B cell (primary cell): ENCODE measurements at regions of chr9 and their contacts with region 1.

Region 1: DNA sequence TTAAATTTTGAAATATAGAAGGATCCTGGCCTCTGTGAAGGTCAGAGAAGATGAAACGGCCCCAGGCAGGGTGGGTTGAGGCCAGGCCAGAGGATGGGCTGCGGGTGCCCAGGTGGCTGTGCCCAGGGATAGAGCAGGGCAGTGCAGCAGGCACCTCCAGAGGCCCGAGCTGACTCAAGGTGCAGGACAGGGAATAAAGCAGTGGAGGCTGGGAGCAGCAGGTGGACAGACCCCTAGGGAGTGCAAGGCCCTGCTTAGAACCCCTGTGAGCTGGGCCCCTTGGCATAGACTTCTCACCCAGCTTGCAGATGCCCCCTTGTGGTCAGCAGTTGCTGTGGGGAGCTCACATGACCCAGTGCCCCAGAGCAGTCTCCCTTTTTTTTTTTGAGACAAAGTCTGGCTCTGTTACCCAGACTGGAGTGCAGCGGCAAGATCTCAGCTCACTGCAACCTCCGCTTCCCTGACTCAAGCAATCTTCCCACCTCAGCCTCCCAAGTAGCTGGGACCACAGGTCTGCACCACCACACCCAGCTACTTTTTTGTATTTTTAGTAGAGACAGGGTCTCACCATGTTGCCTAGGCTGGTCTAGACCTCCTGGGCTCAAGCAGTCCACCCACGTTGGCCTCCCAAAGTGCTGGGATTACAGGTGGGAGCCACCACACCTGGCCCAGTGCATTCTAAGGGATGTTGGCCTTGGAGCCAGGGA is 118.8 kb downstream of the WNK2 start:
- DNase-seq: peak; percentile 82
- ATAC-seq: peak; percentile 82
- H3K4me3 ChIP-seq: no peak overlapping the region
- H3K4me3 Mint-ChIP-seq: no peak overlapping the region
- H3K27ac ChIP-seq: no peak overlapping the region
- H3K27ac Mint-ChIP-seq: no peak overlapping the region
- H3K4me1 ChIP-seq: peaks cover 0 to 5% of the 10 kb centered on the region in 2 donors
- H3K4me1 Mint-ChIP-seq: no peaks in the 10 kb centered on the region
- H3K27me3 ChIP-seq: no peaks in the 10 kb centered on the region
- H3K27me3 Mint-ChIP-seq: peaks cover 7% of the 10 kb centered on the region
- CTCF ChIP-seq: peak; percentile 62

Region 2: DNA sequence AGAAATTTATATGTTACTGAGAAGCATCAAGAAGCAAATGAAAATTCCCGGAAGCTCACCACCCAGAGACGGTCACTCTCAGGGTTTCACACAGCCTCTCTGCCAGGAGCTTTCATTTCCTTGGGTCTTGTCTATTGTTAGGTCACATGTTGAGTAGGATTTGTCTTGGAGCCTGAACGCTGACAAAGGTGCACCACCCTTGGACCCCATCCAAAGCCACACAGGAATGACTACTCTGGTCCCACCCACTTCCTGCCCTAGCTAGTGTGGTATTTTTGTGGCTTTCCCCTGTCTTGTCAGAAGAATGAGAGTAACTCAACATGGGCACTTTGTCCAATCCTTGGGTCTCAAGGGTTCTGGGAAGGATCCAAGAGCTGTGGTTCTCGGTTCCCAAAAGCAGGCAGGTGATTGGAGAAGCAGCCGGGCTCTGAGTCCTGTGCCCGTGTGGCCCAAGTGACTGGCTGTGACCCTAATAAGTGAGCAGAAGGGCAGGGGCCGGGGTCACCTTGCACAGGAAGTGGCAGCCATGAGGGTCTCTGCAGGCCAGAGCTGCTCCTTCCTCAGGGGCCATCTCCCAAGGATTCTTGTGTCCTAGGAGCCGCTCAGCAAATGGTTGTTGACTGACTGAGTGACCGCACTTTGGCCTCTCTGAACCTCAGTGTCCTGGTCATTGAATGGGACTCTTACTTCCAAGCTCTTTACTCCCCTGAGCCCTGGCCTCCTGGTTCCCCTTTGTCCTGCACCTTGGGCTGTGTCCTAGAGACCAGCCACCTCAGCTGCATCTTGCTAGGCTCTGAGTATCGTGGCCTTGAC is 348.4 kb before region 1 on chr9:
- CTCF ChIA-PET with region 1: interaction called, 11 read pairs
- POLR2A ChIA-PET with region 1: interaction called, 3 read pairs
- intact Hi-C with region 1: no loop called
- DNase-seq: peak; percentile 37
- ATAC-seq: peak; percentile 53
- H3K4me3 ChIP-seq: peak overlapping the region in 4 of 5 experiments; percentile 7 to 45 (median 34)
- H3K4me3 Mint-ChIP-seq: peak overlapping the region; percentile 61
- H3K27ac ChIP-seq: peak overlapping the region in 1 of 2 donors; percentile 23
- H3K27ac Mint-ChIP-seq: peak overlapping the region; percentile 26
- H3K4me1 ChIP-seq: peaks cover 16 to 17% of the 10 kb centered on the region in 2 donors
- H3K4me1 Mint-ChIP-seq: peaks cover 24% of the 10 kb centered on the region
- H3K27me3 ChIP-seq: peaks cover 0 to 7% (median 0%) of the 10 kb centered on the region in 4 experiments
- H3K27me3 Mint-ChIP-seq: peaks cover 6% of the 10 kb centered on the region
- CTCF ChIP-seq: no peak

Region 3: DNA sequence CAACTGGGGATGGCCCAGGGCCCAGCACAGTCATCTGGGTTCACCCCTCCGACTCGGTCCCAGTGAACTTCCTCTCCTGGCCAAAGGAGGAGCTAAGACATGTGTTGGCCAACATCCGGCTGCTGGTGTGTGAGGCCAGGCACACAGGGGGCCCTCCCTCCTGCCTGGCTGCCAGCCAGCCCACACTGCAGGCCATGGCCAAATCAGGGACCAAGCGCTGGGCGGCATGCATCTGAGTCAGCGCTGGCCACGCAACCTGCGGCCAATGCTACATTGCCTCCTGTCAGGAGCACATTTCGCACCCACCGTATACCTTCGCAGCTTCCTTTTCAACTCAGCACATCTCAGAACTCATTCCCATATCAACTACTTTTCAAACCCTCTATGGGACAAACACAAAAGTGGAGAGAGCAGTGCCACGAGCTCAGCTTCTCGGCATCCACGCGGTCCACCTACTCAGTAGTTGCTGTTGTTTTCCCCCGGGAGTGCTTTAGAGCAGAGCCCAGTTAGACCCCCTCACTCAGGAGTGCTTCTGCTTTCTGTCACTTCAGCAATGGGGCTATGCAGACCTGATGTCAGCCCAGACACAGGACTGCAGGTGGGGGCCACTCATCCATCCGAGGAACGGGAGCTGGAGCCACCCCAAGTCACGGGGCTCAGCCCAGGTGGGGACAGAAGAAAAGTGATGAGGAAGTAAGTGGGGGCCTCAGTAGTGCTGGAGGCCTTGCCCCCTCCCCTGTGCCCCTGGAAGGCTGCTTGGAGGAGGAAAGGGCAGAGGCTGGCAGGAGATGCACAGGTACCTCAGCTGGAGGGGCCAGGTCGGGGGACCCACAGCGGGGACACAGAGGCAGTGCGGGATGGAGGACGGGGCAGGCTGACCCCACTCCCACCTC is 182.5 kb before region 1 on chr9:
- CTCF ChIA-PET with region 1: interaction called, 10 read pairs
- POLR2A ChIA-PET with region 1: no interaction called
- intact Hi-C with region 1: no loop called
- DNase-seq: peak; percentile 79
- ATAC-seq: peak; percentile 86
- H3K4me3 ChIP-seq: peak overlapping the region in 2 of 5 experiments; percentile 29 to 45
- H3K4me3 Mint-ChIP-seq: peak overlapping the region; percentile 77
- H3K27ac ChIP-seq: peak overlapping the region; percentile 24 to 34
- H3K27ac Mint-ChIP-seq: peak overlapping the region; percentile 79
- H3K4me1 ChIP-seq: peaks cover 13 to 20% of the 10 kb centered on the region in 2 donors
- H3K4me1 Mint-ChIP-seq: peaks cover 14% of the 10 kb centered on the region
- H3K27me3 ChIP-seq: no peaks in the 10 kb centered on the region
- H3K27me3 Mint-ChIP-seq: no peaks in the 10 kb centered on the region
- CTCF ChIP-seq: peak; percentile 58

Region 4: GRCh38 chr9:93159601-93160471 is 142.9 kb before region 1 on chr9:
- CTCF ChIA-PET with region 1: interaction called, 30 read pairs
- POLR2A ChIA-PET with region 1: no interaction called
- intact Hi-C with region 1: loop called (anchors 1 kb)
- DNase-seq: peak; percentile 78
- ATAC-seq: peak; percentile 98
- H3K4me3 ChIP-seq: no peak overlapping the region
- H3K4me3 Mint-ChIP-seq: no peak overlapping the region
- H3K27ac ChIP-seq: no peak overlapping the region
- H3K27ac Mint-ChIP-seq: no peak overlapping the region
- H3K4me1 ChIP-seq: peaks cover 4 to 6% of the 10 kb centered on the region in 2 donors
- H3K4me1 Mint-ChIP-seq: peaks cover 4% of the 10 kb centered on the region
- H3K27me3 ChIP-seq: peaks cover 0 to 3% (median 0%) of the 10 kb centered on the region in 4 experiments
- H3K27me3 Mint-ChIP-seq: no peaks in the 10 kb centered on the region
- CTCF ChIP-seq: peak; percentile 97

Region 5: DNA sequence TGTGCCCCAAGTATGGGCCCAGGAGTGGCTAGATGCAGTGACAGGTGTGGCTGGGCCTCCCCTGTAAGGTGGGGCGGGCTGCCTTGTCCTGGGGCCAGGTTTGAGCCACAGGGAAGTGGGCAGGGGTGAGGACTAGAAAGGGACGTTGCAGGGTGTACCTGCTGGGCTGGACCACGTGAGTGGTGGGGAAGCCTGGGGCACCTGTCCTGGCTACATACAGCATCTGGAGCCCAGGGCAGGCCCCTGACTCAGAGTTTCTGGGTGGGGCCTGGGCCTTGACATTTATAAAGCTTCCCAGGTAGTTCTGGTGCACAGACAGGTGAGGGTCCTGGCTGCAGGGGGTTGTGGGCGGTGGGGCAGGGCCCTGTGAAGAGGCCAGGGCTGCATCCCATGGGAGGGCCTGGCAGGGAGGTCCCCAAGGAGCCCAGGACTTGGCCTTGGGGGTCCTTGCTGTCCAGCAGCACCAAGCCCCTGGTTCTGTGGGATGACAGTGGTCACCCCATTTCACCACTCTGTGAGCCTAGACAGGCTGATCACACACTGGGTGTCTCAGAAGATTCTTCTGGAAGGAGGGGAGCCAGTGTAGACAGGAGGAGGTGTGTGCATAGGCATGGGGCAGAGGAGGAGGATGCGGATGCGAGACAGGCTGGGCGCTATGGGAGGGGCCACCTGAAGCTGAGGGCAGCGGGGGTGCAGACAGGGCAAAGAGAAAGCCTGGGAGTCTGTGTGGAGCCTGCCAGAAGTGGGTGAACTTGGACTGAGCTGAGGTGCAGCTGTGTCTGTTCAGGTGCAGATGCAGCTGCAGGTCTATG is 367.7 kb after region 1 on chr9:
- CTCF ChIA-PET with region 1: no interaction called
- POLR2A ChIA-PET with region 1: no interaction called
- intact Hi-C with region 1: no loop called
- DNase-seq: no peak
- ATAC-seq: no peak
- H3K4me3 ChIP-seq: no peak overlapping the region
- H3K4me3 Mint-ChIP-seq: no peak overlapping the region
- H3K27ac ChIP-seq: no peak overlapping the region
- H3K27ac Mint-ChIP-seq: no peak overlapping the region
- H3K4me1 ChIP-seq: no peaks in the 10 kb centered on the region
- H3K4me1 Mint-ChIP-seq: no peaks in the 10 kb centered on the region
- H3K27me3 ChIP-seq: no peaks in the 10 kb centered on the region
- H3K27me3 Mint-ChIP-seq: no peaks in the 10 kb centered on the region
- CTCF ChIP-seq: no peak